ENCODE measurements at regions of chr3 and their contacts with region 1.

Region 1: DNA sequence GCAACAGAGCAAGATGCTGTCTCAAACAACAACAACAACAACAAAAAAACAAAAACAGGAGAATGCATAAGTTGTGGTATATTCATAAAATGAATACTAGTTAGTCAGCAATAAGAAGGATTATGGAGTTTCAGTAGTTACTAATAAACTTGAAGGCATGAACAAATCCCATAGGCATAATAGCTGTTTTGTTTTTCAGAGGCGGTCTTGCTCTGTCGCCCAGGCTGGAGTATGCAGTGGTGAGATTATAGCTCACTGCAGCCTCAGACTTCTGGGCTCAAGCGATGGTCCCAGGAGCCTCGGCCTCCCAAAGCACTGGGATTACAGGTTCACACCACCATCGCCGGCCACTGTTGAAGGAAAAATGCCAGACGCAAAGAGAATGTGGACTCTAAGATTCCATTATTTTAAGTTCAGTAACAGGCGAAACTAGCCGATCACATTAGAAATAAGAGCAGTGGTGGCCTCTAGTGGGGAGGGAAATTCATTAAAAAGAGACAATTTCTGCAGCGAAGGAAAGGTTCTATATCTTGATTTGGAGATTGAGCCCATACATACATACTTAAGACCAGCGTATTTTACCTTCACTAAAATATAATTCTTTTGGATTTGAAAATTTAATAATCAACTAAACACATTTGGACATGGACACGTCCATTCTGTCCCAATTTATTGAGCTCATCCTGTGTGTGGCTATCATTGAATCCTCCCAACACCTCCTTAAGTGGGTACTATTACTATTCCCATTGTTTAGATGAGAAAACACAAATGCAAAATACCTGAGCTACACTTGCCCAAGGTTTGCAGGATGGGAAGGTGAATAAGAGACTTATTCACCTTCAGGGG is 27.4 kb upstream of the HDAC11 start:
- DNase-seq: peak; percentile 17
- ATAC-seq: peak; percentile 62
- H3K4me3 ChIP-seq: peak overlapping the region; percentile 64
- H3K27ac ChIP-seq: no peak overlapping the region
- H3K4me1 ChIP-seq: peaks cover 4% of the 10 kb centered on the region
- H3K27me3 ChIP-seq: no peaks in the 10 kb centered on the region
- CTCF ChIP-seq: peak; percentile 52 to 75 (median 64)
- EP300 ChIP-seq: no peak
- POLR2A ChIP-seq: no peak
- RAD21 ChIP-seq: peak; percentile 85

Region 2: GRCh38 chr3:13012228-13012691 is 440.5 kb before region 1 on chr3:
- CTCF ChIA-PET with region 1: interaction called, 4 read pairs
- POLR2A ChIA-PET with region 1: no interaction called
- RAD21 ChIA-PET with region 1: interaction called, 7 read pairs
- SMC1A ChIA-PET with region 1: interaction called, 4 read pairs
- in situ Hi-C with region 1: no loop called
- intact Hi-C with region 1: loop called (anchors 10 kb)
- DNase-seq: peak; percentile 84
- ATAC-seq: peak; percentile 58
- H3K4me3 ChIP-seq: peak overlapping the region; percentile 39; the same call in 1 of the 2 replicates
- H3K27ac ChIP-seq: peak overlapping the region; percentile 99
- H3K4me1 ChIP-seq: peaks cover 94% of the 10 kb centered on the region
- H3K27me3 ChIP-seq: no peaks in the 10 kb centered on the region
- CTCF ChIP-seq: no peak
- EP300 ChIP-seq: peak; percentile 51 to 58; a peak in 2 of 4 replicates
- POLR2A ChIP-seq: no peak
- RAD21 ChIP-seq: no peak

Region 3: GRCh38 chr3:13110678-13111116 is 342.0 kb before region 1 on chr3:
- CTCF ChIA-PET with region 1: interaction called, 13 read pairs
- POLR2A ChIA-PET with region 1: no interaction called
- RAD21 ChIA-PET with region 1: interaction called, 8 read pairs
- SMC1A ChIA-PET with region 1: interaction called, 7 read pairs
- in situ Hi-C with region 1: no loop called
- intact Hi-C with region 1: no loop called
- DNase-seq: peak; percentile 76
- ATAC-seq: peak; percentile 95
- H3K4me3 ChIP-seq: no peak overlapping the region
- H3K27ac ChIP-seq: peak overlapping the region; percentile 58
- H3K4me1 ChIP-seq: peaks cover 13% of the 10 kb centered on the region
- H3K27me3 ChIP-seq: no peaks in the 10 kb centered on the region
- CTCF ChIP-seq: no peak
- EP300 ChIP-seq: peak; percentile 15 to 46; a peak in 1 of 4 replicates
- POLR2A ChIP-seq: no peak
- RAD21 ChIP-seq: no peak

Region 4: GRCh38 chr3:13229273-13229949 is 223.3 kb before region 1 on chr3:
- CTCF ChIA-PET with region 1: interaction called, 73 read pairs
- POLR2A ChIA-PET with region 1: no interaction called
- RAD21 ChIA-PET with region 1: interaction called, 58 read pairs
- SMC1A ChIA-PET with region 1: interaction called, 37 read pairs
- in situ Hi-C with region 1: no loop called
- intact Hi-C with region 1: loop called (anchors 10 kb)
- DNase-seq: peak; percentile 2
- ATAC-seq: peak; percentile 93
- H3K4me3 ChIP-seq: no peak overlapping the region
- H3K27ac ChIP-seq: no peak overlapping the region
- H3K4me1 ChIP-seq: no peaks in the 10 kb centered on the region; the same call in 1 of the 2 replicates
- H3K27me3 ChIP-seq: no peaks in the 10 kb centered on the region
- CTCF ChIP-seq: peak; percentile 53 to 60 (median 59)
- EP300 ChIP-seq: no peak
- POLR2A ChIP-seq: no peak
- RAD21 ChIP-seq: peak; percentile 42; the same call in 1 of the 2 replicates

Region 5: DNA sequence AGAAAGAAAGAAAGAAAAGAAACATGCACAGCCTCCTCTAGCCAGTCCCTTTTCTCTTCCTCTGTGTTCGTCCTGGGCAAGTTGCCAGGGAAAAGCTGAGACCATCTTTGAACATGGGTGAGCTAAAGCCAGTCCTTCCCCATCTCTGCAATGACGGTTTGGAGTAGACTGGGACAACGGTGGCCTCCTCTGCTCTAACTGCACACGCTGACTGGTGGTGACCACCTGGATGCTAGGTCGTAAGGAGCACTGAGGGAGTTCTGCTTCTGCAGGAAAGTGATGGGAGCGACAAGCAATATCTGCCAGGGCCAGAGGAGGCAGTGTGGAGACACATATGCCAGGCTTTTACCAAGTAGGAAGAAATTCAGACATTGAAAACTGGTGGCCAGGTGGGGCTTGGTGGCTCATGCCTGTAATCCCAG is 144.3 kb before region 1 on chr3:
- CTCF ChIA-PET with region 1: interaction called, 21 read pairs
- POLR2A ChIA-PET with region 1: no interaction called
- RAD21 ChIA-PET with region 1: interaction called, 6 read pairs
- SMC1A ChIA-PET with region 1: interaction called, 11 read pairs
- in situ Hi-C with region 1: no loop called
- intact Hi-C with region 1: loop called (anchors 5 kb)
- DNase-seq: no peak
- ATAC-seq: peak; percentile 70
- H3K4me3 ChIP-seq: no peak overlapping the region
- H3K27ac ChIP-seq: no peak overlapping the region
- H3K4me1 ChIP-seq: no peaks in the 10 kb centered on the region
- H3K27me3 ChIP-seq: no peaks in the 10 kb centered on the region
- CTCF ChIP-seq: peak; percentile 42 to 59 (median 59)
- EP300 ChIP-seq: no peak
- POLR2A ChIP-seq: no peak
- RAD21 ChIP-seq: peak; percentile 34; the same call in 1 of the 2 replicates

Region 6: GRCh38 chr3:13391308-13391707 is 61.4 kb before region 1 on chr3:
- CTCF ChIA-PET with region 1: interaction called, 36 read pairs
- POLR2A ChIA-PET with region 1: interaction called, 4 read pairs
- RAD21 ChIA-PET with region 1: interaction called, 13 read pairs
- SMC1A ChIA-PET with region 1: interaction called, 14 read pairs
- in situ Hi-C with region 1: no loop called
- intact Hi-C with region 1: loop called (anchors 2 kb)
- DNase-seq: no peak
- ATAC-seq: no peak
- H3K4me3 ChIP-seq: no peak overlapping the region
- H3K27ac ChIP-seq: no peak overlapping the region
- H3K4me1 ChIP-seq: no peaks in the 10 kb centered on the region
- H3K27me3 ChIP-seq: no peaks in the 10 kb centered on the region
- CTCF ChIP-seq: peak in 1 of 3 experiments; percentile 12; a peak in 1 of 6 replicates
- EP300 ChIP-seq: no peak
- POLR2A ChIP-seq: no peak
- RAD21 ChIP-seq: 0 out of 2 replicates have a peak, but pooled peaks have one; percentile 2

Region 7: DNA sequence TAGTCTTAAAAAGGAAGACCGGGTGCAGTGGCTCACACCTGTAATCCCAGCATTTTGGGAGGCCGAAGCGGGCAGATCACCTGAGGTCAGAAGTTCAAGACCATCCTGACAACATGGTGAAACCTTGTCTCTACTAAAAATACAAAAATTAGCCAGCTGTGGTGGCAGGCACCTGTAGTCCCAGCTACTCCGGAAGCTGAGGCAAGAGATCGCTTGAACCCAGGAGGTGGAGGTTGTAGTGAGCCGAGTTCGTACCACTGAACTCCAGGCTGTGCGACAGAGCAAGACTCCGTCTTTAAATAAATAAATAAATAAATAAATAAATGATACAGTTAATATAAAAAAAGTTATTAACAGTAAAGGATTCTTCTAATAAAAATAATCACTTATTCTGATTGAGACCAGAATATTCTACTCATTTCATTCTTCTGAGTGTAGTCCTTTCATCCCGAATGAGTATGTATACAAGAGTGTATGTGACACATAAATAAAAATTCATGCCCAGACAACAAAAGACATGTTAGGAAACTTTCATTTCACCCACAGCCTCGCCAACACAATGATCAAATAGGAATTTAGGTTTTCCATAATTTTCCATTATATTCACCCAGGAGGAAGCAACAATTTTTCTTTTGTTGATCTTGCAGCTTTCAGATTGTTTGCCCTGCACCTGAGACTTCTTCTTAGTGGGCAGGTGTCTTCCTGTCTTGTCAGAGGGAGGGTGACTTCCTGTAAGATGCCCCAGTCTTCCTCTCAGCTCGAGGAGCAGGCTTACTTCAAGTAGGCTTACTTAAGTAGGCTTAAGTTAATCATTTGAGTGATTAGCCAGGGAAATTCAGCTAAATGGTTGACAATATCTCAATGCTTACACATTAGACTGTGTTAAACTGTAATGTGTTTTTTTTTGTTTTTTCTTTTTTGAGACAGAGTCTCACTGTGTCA is 24.8 kb before region 1 on chr3:
- CTCF ChIA-PET with region 1: interaction called, 20 read pairs
- POLR2A ChIA-PET with region 1: no interaction called
- RAD21 ChIA-PET with region 1: interaction called, 13 read pairs
- SMC1A ChIA-PET with region 1: interaction called, 14 read pairs
- in situ Hi-C with region 1: no loop called
- intact Hi-C with region 1: no loop called
- DNase-seq: no peak
- ATAC-seq: peak; percentile 61
- H3K4me3 ChIP-seq: no peak overlapping the region
- H3K27ac ChIP-seq: no peak overlapping the region
- H3K4me1 ChIP-seq: no peaks in the 10 kb centered on the region
- H3K27me3 ChIP-seq: no peaks in the 10 kb centered on the region
- CTCF ChIP-seq: no peak
- EP300 ChIP-seq: no peak
- POLR2A ChIP-seq: no peak
- RAD21 ChIP-seq: no peak

Region 8: DNA sequence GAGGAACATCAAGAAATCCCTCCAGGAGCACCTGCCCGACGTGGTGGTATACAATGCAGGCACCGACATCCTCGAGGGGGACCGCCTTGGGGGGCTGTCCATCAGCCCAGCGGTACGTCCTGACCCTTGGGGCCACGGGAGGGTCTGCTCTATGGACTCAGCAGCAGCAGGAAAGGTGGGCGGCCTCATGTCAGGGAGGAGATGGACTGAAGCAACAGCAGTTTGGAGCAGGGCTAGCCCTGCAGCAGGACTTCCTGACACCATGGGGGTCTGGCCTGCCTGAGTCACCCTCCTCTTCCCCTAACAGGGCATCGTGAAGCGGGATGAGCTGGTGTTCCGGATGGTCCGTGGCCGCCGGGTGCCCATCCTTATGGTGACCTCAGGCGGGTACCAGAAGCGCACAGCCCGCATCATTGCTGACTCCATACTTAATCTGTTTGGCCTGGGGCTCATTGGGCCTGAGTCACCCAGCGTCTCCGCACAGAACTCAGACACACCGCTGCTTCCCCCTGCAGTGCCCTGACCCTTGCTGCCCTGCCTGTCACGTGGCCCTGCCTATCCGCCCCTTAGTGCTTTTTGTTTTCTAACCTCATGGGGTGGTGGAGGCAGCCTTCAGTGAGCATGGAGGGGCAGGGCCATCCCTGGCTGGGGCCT is 51.6 kb after region 1 on chr3:
- CTCF ChIA-PET with region 1: no interaction called
- POLR2A ChIA-PET with region 1: no interaction called
- RAD21 ChIA-PET with region 1: no interaction called
- SMC1A ChIA-PET with region 1: no interaction called
- in situ Hi-C with region 1: no loop called
- intact Hi-C with region 1: no loop called
- DNase-seq: no peak
- ATAC-seq: no peak
- H3K4me3 ChIP-seq: no peak overlapping the region
- H3K27ac ChIP-seq: no peak overlapping the region
- H3K4me1 ChIP-seq: no peaks in the 10 kb centered on the region
- H3K27me3 ChIP-seq: no peaks in the 10 kb centered on the region; a peak in 1 of 4 replicates
- CTCF ChIP-seq: no peak
- EP300 ChIP-seq: no peak
- POLR2A ChIP-seq: no peak
- RAD21 ChIP-seq: no peak

Region 9: GRCh38 chr3:13559764-13560525 is 107.2 kb after region 1 on chr3:
- CTCF ChIA-PET with region 1: no interaction called
- POLR2A ChIA-PET with region 1: no interaction called
- RAD21 ChIA-PET with region 1: no interaction called
- SMC1A ChIA-PET with region 1: no interaction called
- in situ Hi-C with region 1: no loop called
- intact Hi-C with region 1: no loop called
- DNase-seq: no peak
- ATAC-seq: no peak
- H3K4me3 ChIP-seq: no peak overlapping the region
- H3K27ac ChIP-seq: no peak overlapping the region
- H3K4me1 ChIP-seq: no peaks in the 10 kb centered on the region
- H3K27me3 ChIP-seq: peaks cover 0 to 1% of the 10 kb centered on the region in 2 experiments; a peak in 2 of 4 replicates
- CTCF ChIP-seq: no peak
- EP300 ChIP-seq: no peak
- POLR2A ChIP-seq: no peak
- RAD21 ChIP-seq: no peak